ENCODE measurements at regions of chr17 and their contacts with region 1.

Region 1: DNA sequence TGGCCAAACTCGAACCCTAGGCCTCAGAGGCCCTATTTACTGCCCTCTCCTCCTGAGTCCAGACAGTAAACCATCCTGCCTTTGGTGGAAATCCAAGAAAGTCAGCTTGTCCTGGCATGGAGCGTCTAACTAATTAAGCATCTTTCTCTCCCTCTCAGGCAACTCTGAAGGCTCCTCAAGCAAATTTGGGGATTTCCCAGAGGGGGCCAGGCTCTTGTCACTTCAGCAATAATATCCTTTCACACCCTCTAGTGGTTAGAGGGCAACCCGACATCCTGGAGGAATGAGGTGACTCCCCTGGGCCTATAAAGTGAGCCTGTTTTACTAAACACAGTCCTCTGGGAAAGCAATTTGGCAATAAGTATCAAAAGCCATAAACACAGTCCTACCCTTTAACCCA is 60.4 kb downstream of the NOG start:
- DNase-seq: peak; percentile 60
- ATAC-seq: peak; percentile 89
- H3K4me3 Mint-ChIP-seq: no peak overlapping the region
- H3K27ac Mint-ChIP-seq: no peak overlapping the region
- H3K4me1 Mint-ChIP-seq: peaks cover 2% of the 10 kb centered on the region
- H3K27me3 Mint-ChIP-seq: peaks cover 17% of the 10 kb centered on the region

Region 2: GRCh38 chr17:56592487-56593085 is 61.3 kb before region 1 on chr17:
- CTCF ChIA-PET with region 1: interaction called, 34 read pairs
- POLR2A ChIA-PET with region 1: no interaction called
- DNase-seq: peak; percentile 66
- ATAC-seq: peak; percentile 70
- H3K4me3 Mint-ChIP-seq: peak overlapping the region; percentile 36
- H3K27ac Mint-ChIP-seq: no peak overlapping the region
- H3K4me1 Mint-ChIP-seq: peaks cover 27% of the 10 kb centered on the region
- H3K27me3 Mint-ChIP-seq: peaks cover 50% of the 10 kb centered on the region

Region 3: GRCh38 chr17:56613131-56613530 is 40.7 kb before region 1 on chr17:
- CTCF ChIA-PET with region 1: no interaction called
- POLR2A ChIA-PET with region 1: no interaction called
- DNase-seq: no peak
- ATAC-seq: no peak
- H3K4me3 Mint-ChIP-seq: no peak overlapping the region
- H3K27ac Mint-ChIP-seq: no peak overlapping the region
- H3K4me1 Mint-ChIP-seq: no peaks in the 10 kb centered on the region
- H3K27me3 Mint-ChIP-seq: peaks cover 3% of the 10 kb centered on the region

Region 4: GRCh38 chr17:56638591-56639051 is 15.3 kb before region 1 on chr17:
- CTCF ChIA-PET with region 1: no interaction called
- POLR2A ChIA-PET with region 1: no interaction called
- DNase-seq: no peak
- ATAC-seq: no peak
- H3K4me3 Mint-ChIP-seq: no peak overlapping the region
- H3K27ac Mint-ChIP-seq: no peak overlapping the region
- H3K4me1 Mint-ChIP-seq: no peaks in the 10 kb centered on the region
- H3K27me3 Mint-ChIP-seq: peaks cover 5% of the 10 kb centered on the region